ENCODE measurements at regions of chr2 and their contacts with region 1.

Region 1: DNA sequence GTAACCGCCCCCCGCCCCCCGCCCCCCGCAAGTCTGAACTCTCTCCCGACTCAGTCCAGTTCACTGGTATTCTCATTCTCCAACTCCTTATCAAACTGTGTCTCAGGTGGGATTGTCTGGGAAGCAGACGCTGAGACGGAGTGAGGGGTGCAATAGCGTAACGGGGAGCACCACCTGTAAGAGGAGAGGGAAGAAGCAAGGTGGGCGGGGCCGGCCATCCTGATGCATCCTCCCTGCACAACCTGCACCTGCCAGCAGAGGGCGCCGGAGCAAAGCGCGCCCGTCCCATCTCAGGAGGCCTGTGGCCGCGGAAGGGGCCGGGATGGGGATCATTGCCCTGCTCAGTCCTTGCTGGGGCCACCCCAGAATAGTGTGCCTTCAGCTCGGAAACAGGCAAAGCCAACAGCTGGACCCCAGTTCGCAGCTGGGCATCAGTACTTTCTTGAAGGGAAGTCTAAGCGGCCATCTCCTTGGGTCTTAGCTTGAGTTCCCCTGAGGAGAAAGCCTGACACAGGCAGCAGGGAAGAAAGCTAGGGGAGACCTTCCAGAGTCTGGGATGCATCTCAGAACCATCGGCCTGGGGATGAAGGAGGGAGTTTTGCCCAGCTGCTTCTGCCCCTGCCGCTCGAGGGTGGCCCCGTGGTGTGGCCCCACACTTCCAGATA is 208.0 kb downstream of the TFCP2L1 start:
- DNase-seq: peak in 1 of 2 experiments; percentile 99
- H3K4me3 ChIP-seq: peak overlapping the region in 3 of 4 experiments; percentile 28 to 54 (median 36); a peak in 6 of 8 replicates
- H3K27ac ChIP-seq: no peak overlapping the region
- H3K4me1 ChIP-seq: peaks cover 0 to 19% (median 13%) of the 10 kb centered on the region in 4 experiments; a peak in 6 of 7 replicates
- H3K27me3 ChIP-seq: peaks cover 0 to 32% (median 20%) of the 10 kb centered on the region in 4 experiments; a peak in 6 of 7 replicates
- CTCF ChIP-seq: peak in 2 of 3 experiments; percentile 94 to 99; a peak in 3 of 4 replicates
- EP300 ChIP-seq: no peak
- POLR2A ChIP-seq: no peak
- RAD21 ChIP-seq: peak; percentile 52 to 61

Region 2: DNA sequence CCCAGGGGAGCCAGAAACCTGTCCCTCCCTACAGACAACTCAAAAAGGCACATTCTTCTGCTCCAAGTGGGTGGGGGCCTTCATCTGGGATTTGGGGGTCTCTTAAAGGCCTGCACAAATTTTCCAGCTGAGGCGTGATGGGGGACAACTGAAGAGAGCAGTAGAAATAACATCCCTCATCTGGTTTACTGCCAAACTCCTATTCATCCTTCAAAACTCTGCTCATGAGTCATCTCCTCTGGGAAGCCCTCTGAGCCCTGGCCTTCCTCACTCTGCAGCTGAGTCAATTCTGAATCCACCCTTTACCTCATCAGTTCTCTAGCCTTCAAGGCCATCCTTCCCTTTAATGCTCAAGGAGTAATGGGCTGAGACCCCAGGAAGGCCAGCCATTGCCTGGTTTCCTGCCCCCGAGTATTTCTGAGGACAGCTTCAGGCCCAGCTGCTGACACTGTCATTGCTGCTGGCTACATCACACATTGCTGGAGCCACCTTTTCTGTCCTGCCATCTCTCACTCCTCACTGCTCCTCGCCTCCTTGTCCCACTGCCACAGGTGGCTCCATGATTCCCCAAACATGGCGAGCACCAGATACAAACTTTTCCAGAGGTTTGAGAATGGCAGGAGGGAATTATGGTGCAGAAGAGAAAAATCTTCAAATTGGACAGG is 373.6 kb before region 1 on chr2:
- CTCF ChIA-PET with region 1: interaction called, 81 read pairs
- POLR2A ChIA-PET with region 1: interaction called, 26 read pairs
- DNase-seq: no peak
- H3K4me3 ChIP-seq: no peak overlapping the region
- H3K27ac ChIP-seq: no peak overlapping the region
- H3K4me1 ChIP-seq: peaks cover 2 to 22% (median 8%) of the 10 kb centered on the region in 4 experiments
- H3K27me3 ChIP-seq: peaks cover 0 to 11% (median 6%) of the 10 kb centered on the region in 4 experiments; a peak in 3 of 7 replicates
- CTCF ChIP-seq: no peak
- EP300 ChIP-seq: no peak
- POLR2A ChIP-seq: no peak
- RAD21 ChIP-seq: no peak

Region 3: GRCh38 chr2:120861576-120862191 is 215.3 kb before region 1 on chr2:
- CTCF ChIA-PET with region 1: interaction called, 4 read pairs
- POLR2A ChIA-PET with region 1: interaction called, 10 read pairs
- DNase-seq: no peak
- H3K4me3 ChIP-seq: no peak overlapping the region
- H3K27ac ChIP-seq: no peak overlapping the region
- H3K4me1 ChIP-seq: peaks cover 5 to 42% (median 20%) of the 10 kb centered on the region in 4 experiments
- H3K27me3 ChIP-seq: no peaks in the 10 kb centered on the region
- CTCF ChIP-seq: no peak
- EP300 ChIP-seq: no peak
- POLR2A ChIP-seq: no peak
- RAD21 ChIP-seq: no peak

Region 4: DNA sequence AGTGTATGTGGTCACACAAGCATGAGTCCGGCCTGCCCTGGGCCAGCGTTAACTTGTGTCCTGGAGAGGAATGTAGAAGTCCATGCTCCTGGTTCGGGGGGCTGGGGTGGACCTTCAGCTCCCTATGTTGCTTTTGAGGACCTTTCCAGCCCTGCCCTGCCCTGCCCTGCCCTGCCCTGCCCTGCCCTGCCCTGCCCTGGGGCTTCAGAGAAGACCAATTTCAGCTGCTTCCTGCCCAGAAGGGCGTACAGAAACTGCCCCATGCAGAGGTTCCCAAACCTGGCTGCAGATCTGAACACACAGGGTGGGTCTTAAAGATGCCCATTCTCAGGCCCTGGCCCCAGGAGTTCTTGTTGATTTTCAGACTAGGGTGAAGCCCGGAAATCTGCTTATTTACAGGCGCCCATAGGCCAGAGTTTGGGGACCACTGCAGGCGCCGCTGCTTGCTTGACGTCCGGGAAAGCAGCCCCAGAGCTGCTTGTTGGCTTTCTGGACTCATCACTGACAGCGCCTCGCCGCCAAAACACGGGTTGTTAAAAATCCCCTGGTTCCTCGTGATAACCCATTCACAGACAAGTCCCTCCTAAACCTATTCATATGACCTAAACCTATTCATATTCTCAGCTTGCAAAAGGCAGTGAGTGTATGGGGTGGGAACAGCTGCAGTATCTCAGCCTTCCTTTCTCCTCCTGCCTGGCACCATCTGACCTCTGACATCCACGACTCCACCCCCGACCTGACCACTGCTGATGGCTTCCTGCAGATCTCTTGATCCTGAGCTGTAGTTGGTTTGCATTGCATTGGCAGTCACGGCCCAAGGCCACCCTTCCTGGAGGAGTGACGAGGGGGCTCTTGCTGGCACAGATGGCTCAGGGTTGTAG is 143.1 kb before region 1 on chr2:
- CTCF ChIA-PET with region 1: no interaction called
- POLR2A ChIA-PET with region 1: no interaction called
- DNase-seq: no peak
- H3K4me3 ChIP-seq: no peak overlapping the region
- H3K27ac ChIP-seq: no peak overlapping the region
- H3K4me1 ChIP-seq: peaks cover 0 to 5% (median 2%) of the 10 kb centered on the region in 4 experiments; a peak in 3 of 7 replicates
- H3K27me3 ChIP-seq: no peaks in the 10 kb centered on the region
- CTCF ChIP-seq: no peak
- EP300 ChIP-seq: no peak
- POLR2A ChIP-seq: no peak
- RAD21 ChIP-seq: no peak

Region 5: DNA sequence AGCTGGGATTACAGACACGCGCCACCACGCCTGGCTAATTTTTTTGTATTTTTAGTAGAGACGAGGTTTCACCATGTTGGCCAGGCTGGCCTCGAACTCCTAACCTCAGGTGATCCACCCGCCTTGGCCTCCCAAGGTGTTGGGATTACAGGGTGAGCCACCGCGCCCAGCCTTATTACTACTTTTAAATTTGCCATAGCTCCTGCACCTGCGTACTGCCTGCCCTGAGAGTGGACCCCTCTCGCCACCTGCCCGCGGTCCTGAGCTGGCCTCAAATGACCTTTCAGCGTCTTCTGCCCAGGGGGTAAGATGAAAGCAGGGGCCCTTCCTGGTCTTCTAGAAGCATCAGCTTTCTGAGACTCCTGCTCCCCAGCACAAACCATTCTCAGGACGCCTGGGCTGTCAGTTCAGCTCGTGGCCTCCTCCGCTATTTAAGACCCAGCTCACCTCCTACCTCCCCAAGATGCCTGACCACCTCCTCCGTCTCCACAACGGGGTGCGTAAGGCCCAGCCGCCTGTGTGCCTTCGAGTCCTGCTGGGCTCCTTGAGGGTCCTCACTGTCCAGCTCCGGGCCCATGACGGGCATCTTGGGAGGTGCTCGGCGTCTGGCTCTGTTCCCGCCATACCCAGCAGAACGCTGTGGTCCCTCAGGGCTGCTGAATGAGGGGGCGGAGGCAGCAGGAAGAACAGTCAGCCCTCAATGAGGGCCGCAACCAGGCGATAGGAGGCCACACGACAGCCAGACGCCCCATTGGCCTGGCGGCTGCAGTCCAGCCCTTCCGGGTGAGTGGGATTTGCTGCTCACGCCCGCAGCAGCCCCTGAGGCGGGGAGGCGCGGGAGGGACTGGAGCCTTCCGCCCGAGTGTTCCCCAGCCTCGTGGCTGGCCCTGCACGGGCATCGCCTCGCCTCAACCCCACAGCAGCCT is 58.6 kb before region 1 on chr2:
- CTCF ChIA-PET with region 1: interaction called, 8 read pairs
- POLR2A ChIA-PET with region 1: interaction called, 24 read pairs
- DNase-seq: peak; percentile 53 to 77
- H3K4me3 ChIP-seq: peak overlapping the region in 1 of 4 experiments; percentile 33; a peak in 1 of 8 replicates
- H3K27ac ChIP-seq: no peak overlapping the region
- H3K4me1 ChIP-seq: peaks cover 0 to 11% (median 10%) of the 10 kb centered on the region in 4 experiments; a peak in 6 of 7 replicates
- H3K27me3 ChIP-seq: peaks cover 0 to 9% (median 5%) of the 10 kb centered on the region in 4 experiments; a peak in 4 of 7 replicates
- CTCF ChIP-seq: no peak
- EP300 ChIP-seq: no peak
- POLR2A ChIP-seq: peak in 1 of 2 experiments; percentile 38; a peak in 1 of 3 replicates
- RAD21 ChIP-seq: no peak

Region 6: GRCh38 chr2:121052521-121052920 is 24.5 kb before region 1 on chr2:
- CTCF ChIA-PET with region 1: interaction called, 23 read pairs
- POLR2A ChIA-PET with region 1: interaction called, 26 read pairs
- DNase-seq: no peak
- H3K4me3 ChIP-seq: no peak overlapping the region
- H3K27ac ChIP-seq: no peak overlapping the region
- H3K4me1 ChIP-seq: no peaks in the 10 kb centered on the region
- H3K27me3 ChIP-seq: peaks cover 0 to 4% (median 3%) of the 10 kb centered on the region in 4 experiments; a peak in 3 of 7 replicates
- CTCF ChIP-seq: no peak
- EP300 ChIP-seq: no peak
- POLR2A ChIP-seq: no peak
- RAD21 ChIP-seq: no peak

Region 7: GRCh38 chr2:121356058-121356640 is 279.1 kb after region 1 on chr2:
- CTCF ChIA-PET with region 1: interaction called, 144 read pairs
- POLR2A ChIA-PET with region 1: no interaction called
- DNase-seq: peak; percentile 46 to 71
- H3K4me3 ChIP-seq: no peak overlapping the region
- H3K27ac ChIP-seq: no peak overlapping the region
- H3K4me1 ChIP-seq: no peaks in the 10 kb centered on the region
- H3K27me3 ChIP-seq: no peaks in the 10 kb centered on the region
- CTCF ChIP-seq: peak in 2 of 3 experiments; percentile 75 to 85; a peak in 3 of 4 replicates
- EP300 ChIP-seq: no peak
- POLR2A ChIP-seq: no peak
- RAD21 ChIP-seq: peak; percentile 77 to 80

Region 8: GRCh38 chr2:121386707-121387106 is 309.7 kb after region 1 on chr2:
- CTCF ChIA-PET with region 1: no interaction called
- POLR2A ChIA-PET with region 1: no interaction called
- DNase-seq: no peak
- H3K4me3 ChIP-seq: no peak overlapping the region
- H3K27ac ChIP-seq: no peak overlapping the region
- H3K4me1 ChIP-seq: no peaks in the 10 kb centered on the region
- H3K27me3 ChIP-seq: no peaks in the 10 kb centered on the region
- CTCF ChIP-seq: no peak
- EP300 ChIP-seq: no peak
- POLR2A ChIP-seq: no peak
- RAD21 ChIP-seq: no peak

Measured in H1 (cell line).